Heart right ventricle (tissue), 16 donors: ENCODE measurements at regions of chr2 and their contacts with region 1.

Region 1: DNA sequence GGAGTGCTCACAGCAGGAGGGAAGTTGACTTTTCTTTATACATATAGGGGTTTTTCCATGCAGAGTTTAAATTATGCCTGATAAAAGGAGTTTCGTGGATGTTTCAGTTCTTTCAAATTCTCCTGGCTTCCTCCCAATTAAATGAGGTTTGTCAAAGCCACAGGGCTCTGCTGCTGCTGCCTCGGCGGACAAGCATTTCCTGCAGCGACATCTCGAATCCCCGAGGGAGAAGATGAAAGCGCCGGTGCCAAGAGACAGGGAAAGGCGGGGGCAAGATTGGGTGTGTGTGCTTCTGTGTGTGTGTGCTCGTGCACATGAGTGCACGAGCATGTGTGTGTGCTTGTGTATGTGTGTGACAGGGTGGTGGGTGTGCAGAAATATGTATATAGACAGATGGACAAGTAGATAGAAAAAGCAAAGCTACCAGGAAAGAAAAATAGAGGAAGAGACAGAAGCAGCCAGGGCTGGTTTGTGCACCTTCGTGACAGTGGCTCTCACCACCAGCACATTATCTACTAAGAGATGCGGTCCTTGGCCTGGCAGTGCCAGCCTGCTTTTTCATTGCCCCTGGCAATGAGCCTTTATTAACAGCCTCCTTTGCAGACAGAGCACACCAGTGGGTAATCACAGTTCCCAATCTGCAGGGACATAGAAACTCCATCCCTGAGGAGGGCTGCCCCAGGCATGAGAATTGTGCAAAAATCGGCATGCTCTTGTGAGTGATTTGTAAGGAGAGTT is 76.2 kb downstream of the CDK15 start:
- DNase-seq: peak; percentile 29 to 54
- ATAC-seq: peak in 4 of 8 donors; percentile 21 to 52 (median 29)
- H3K4me3 ChIP-seq: no peak overlapping the region
- H3K27ac ChIP-seq: peak overlapping the region in 2 of 10 donors; percentile 81 to 83
- H3K4me1 ChIP-seq: peaks cover 4 to 41% (median 29%) of the 10 kb centered on the region in 9 donors
- H3K27me3 ChIP-seq: peaks cover 0 to 16% (median 4%) of the 10 kb centered on the region in 7 donors
- CTCF ChIP-seq: no peak

Region 2: DNA sequence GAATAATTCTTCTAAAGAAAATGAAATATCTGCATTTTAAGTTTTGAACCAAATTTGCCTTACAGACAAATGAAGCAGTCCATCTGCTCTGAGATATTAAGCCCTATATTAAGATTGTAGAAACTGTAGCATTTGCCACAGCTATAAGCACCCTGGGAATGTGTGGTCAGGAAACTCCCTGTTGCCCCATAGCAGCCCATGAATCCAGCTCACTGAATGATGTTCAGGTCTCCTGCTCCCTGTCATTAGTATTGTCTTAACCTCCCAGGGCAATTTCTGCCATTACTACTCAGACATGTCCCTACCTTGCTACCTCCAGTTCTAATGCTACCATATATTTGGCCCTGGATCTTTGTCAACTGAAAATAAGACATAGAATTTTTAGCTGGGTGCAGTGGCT is 35.0 kb before region 1 on chr2:
- intact Hi-C with region 1: no loop called
- DNase-seq: no peak
- ATAC-seq: no peak
- H3K4me3 ChIP-seq: no peak overlapping the region
- H3K27ac ChIP-seq: no peak overlapping the region
- H3K4me1 ChIP-seq: no peaks in the 10 kb centered on the region
- H3K27me3 ChIP-seq: peaks cover 0 to 8% (median 0%) of the 10 kb centered on the region in 7 donors
- CTCF ChIP-seq: no peak

Region 3: GRCh38 chr2:201950606-201951005 is 68.1 kb after region 1 on chr2:
- intact Hi-C with region 1: loop called in 1 of 10 experiments (anchors 5 kb)
- DNase-seq: no peak
- ATAC-seq: no peak
- H3K4me3 ChIP-seq: no peak overlapping the region
- H3K27ac ChIP-seq: no peak overlapping the region
- H3K4me1 ChIP-seq: peaks cover 0 to 20% (median 8%) of the 10 kb centered on the region in 9 donors
- H3K27me3 ChIP-seq: peaks cover 0 to 33% (median 19%) of the 10 kb centered on the region in 7 donors
- CTCF ChIP-seq: no peak